CD8-positive, alpha-beta T cell (primary cell): ENCODE measurements at regions of chr14 and their contacts with region 1.

Region 1: GRCh38 chr14:81519200-81520011 is 14.2 kb downstream of the SEL1L start:
- DNase-seq: peak in 2 of 9 experiments; percentile 8 to 38
- ATAC-seq: peak; percentile 64
- H3K4me3 ChIP-seq: no peak overlapping the region
- H3K4me3 Mint-ChIP-seq: peak overlapping the region; percentile 12
- H3K27ac ChIP-seq: peak overlapping the region; percentile 9 to 67
- H3K27ac Mint-ChIP-seq: peak overlapping the region; percentile 74
- H3K4me1 ChIP-seq: peaks cover 18% of the 10 kb centered on the region
- H3K4me1 Mint-ChIP-seq: peaks cover 38% of the 10 kb centered on the region
- H3K27me3 ChIP-seq: no peaks in the 10 kb centered on the region
- H3K27me3 Mint-ChIP-seq: no peaks in the 10 kb centered on the region
- CTCF ChIP-seq: no peak

Region 2: DNA sequence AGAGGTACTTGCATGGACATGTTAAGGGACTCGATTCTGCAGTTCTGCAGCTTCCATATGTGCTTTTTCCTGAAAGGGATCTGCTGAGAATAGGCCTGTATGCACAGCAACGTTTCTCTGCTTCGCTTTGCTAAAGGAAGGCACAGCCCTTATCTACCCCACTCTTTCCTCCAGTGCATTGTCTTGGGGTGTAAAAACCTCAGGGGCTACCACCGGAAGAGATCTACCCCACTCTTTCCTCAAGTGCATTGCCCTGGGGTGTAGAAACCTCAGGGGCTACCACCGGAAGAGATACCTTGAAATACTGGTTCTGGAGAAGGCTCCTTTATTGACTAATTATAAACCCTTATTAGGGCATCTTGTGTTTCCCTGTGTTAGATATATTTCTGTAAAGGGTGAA is 38.7 kb before region 1 on chr14:
- CTCF ChIA-PET with region 1: no interaction called
- POLR2A ChIA-PET with region 1: no interaction called
- intact Hi-C with region 1: loop called in 1 of 2 experiments (anchors 5 kb)
- DNase-seq: peak in 2 of 9 experiments; percentile 50 to 65
- ATAC-seq: peak; percentile 36
- H3K4me3 ChIP-seq: no peak overlapping the region
- H3K4me3 Mint-ChIP-seq: no peak overlapping the region
- H3K27ac ChIP-seq: no peak overlapping the region
- H3K27ac Mint-ChIP-seq: peak overlapping the region; percentile 32
- H3K4me1 ChIP-seq: no peaks in the 10 kb centered on the region
- H3K4me1 Mint-ChIP-seq: peaks cover 11% of the 10 kb centered on the region
- H3K27me3 ChIP-seq: no peaks in the 10 kb centered on the region
- H3K27me3 Mint-ChIP-seq: no peaks in the 10 kb centered on the region
- CTCF ChIP-seq: no peak

Region 3: GRCh38 chr14:81509321-81509720 is 10.1 kb before region 1 on chr14:
- CTCF ChIA-PET with region 1: no interaction called
- POLR2A ChIA-PET with region 1: no interaction called
- intact Hi-C with region 1: no loop called
- DNase-seq: no peak
- ATAC-seq: no peak
- H3K4me3 ChIP-seq: no peak overlapping the region
- H3K4me3 Mint-ChIP-seq: no peak overlapping the region
- H3K27ac ChIP-seq: no peak overlapping the region
- H3K27ac Mint-ChIP-seq: no peak overlapping the region
- H3K4me1 ChIP-seq: no peaks in the 10 kb centered on the region
- H3K4me1 Mint-ChIP-seq: peaks cover 38% of the 10 kb centered on the region
- H3K27me3 ChIP-seq: no peaks in the 10 kb centered on the region
- H3K27me3 Mint-ChIP-seq: no peaks in the 10 kb centered on the region
- CTCF ChIP-seq: no peak

Region 4: DNA sequence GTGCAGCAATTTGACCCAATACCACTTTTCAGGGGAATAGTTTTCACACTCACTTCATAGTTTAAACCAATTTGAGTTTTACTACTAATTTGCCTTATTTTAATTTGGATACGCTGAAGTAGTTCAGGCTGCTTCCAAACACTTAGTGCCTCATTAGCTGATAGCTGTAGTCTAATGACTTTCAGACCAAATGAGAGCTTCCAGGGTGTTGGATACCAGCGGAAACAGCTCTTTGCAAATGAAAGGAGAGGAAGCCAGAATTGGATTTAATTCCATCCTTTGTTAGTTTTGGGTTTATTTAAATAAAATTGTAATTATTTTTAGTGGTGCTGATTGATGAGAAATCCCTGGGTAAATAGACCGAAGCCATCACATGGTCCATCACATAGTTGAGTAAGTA is 172.5 kb after region 1 on chr14:
- CTCF ChIA-PET with region 1: no interaction called
- POLR2A ChIA-PET with region 1: no interaction called
- intact Hi-C with region 1: no loop called
- DNase-seq: no peak
- ATAC-seq: no peak
- H3K4me3 ChIP-seq: no peak overlapping the region
- H3K4me3 Mint-ChIP-seq: no peak overlapping the region
- H3K27ac ChIP-seq: no peak overlapping the region
- H3K27ac Mint-ChIP-seq: no peak overlapping the region
- H3K4me1 ChIP-seq: no peaks in the 10 kb centered on the region
- H3K4me1 Mint-ChIP-seq: no peaks in the 10 kb centered on the region
- H3K27me3 ChIP-seq: no peaks in the 10 kb centered on the region
- H3K27me3 Mint-ChIP-seq: no peaks in the 10 kb centered on the region
- CTCF ChIP-seq: no peak

Region 5: GRCh38 chr14:81727218-81727617 is 207.8 kb after region 1 on chr14:
- CTCF ChIA-PET with region 1: no interaction called
- POLR2A ChIA-PET with region 1: no interaction called
- intact Hi-C with region 1: no loop called
- DNase-seq: no peak
- ATAC-seq: no peak
- H3K4me3 ChIP-seq: no peak overlapping the region
- H3K4me3 Mint-ChIP-seq: no peak overlapping the region
- H3K27ac ChIP-seq: no peak overlapping the region
- H3K27ac Mint-ChIP-seq: no peak overlapping the region
- H3K4me1 ChIP-seq: no peaks in the 10 kb centered on the region
- H3K4me1 Mint-ChIP-seq: no peaks in the 10 kb centered on the region
- H3K27me3 ChIP-seq: no peaks in the 10 kb centered on the region
- H3K27me3 Mint-ChIP-seq: peaks cover 5% of the 10 kb centered on the region
- CTCF ChIP-seq: no peak

Region 6: DNA sequence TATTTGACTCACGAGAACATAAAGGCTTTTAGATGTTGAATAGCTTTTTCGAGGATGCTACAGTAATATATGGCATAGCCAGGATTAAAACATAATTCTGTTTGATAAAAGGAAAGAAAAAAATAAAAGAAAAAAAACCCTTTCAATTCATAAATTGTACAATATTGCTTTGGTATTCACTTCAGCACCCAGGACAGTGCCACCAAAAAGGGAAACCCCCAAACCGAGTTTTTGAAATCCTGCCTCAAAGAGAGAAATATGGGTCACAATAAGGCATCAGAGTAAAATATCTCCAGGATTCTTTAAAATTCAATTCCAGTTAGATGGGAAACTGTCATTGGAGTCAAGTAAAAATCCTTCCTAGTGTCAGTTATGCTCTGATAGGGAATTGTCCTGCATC is 565.4 kb after region 1 on chr14:
- CTCF ChIA-PET with region 1: no interaction called
- POLR2A ChIA-PET with region 1: no interaction called
- intact Hi-C with region 1: no loop called
- DNase-seq: no peak
- ATAC-seq: no peak
- H3K4me3 ChIP-seq: no peak overlapping the region
- H3K4me3 Mint-ChIP-seq: no peak overlapping the region
- H3K27ac ChIP-seq: no peak overlapping the region
- H3K27ac Mint-ChIP-seq: no peak overlapping the region
- H3K4me1 ChIP-seq: no peaks in the 10 kb centered on the region
- H3K4me1 Mint-ChIP-seq: no peaks in the 10 kb centered on the region
- H3K27me3 ChIP-seq: no peaks in the 10 kb centered on the region
- H3K27me3 Mint-ChIP-seq: no peaks in the 10 kb centered on the region
- CTCF ChIP-seq: no peak